ENCODE measurements at regions of chr13 and their contacts with region 1.

Region 1: GRCh38 chr13:113153810-113154748 is 4.4 kb upstream of the PROZ start:
- DNase-seq: peak; percentile 59 to 88 (median 72)
- ATAC-seq: peak; percentile 83
- H3K4me3 ChIP-seq: peak overlapping the region; percentile 74
- H3K4me3 Mint-ChIP-seq: peak overlapping the region; percentile 90
- H3K27ac ChIP-seq: peak overlapping the region in 1 of 2 donors; percentile 73
- H3K27ac Mint-ChIP-seq: peak overlapping the region; percentile 84
- H3K4me1 ChIP-seq: peaks cover 33% of the 10 kb centered on the region
- H3K4me1 Mint-ChIP-seq: peaks cover 21% of the 10 kb centered on the region
- H3K27me3 ChIP-seq: no peaks in the 10 kb centered on the region
- H3K27me3 Mint-ChIP-seq: no peaks in the 10 kb centered on the region
- CTCF ChIP-seq: no peak

Region 2: DNA sequence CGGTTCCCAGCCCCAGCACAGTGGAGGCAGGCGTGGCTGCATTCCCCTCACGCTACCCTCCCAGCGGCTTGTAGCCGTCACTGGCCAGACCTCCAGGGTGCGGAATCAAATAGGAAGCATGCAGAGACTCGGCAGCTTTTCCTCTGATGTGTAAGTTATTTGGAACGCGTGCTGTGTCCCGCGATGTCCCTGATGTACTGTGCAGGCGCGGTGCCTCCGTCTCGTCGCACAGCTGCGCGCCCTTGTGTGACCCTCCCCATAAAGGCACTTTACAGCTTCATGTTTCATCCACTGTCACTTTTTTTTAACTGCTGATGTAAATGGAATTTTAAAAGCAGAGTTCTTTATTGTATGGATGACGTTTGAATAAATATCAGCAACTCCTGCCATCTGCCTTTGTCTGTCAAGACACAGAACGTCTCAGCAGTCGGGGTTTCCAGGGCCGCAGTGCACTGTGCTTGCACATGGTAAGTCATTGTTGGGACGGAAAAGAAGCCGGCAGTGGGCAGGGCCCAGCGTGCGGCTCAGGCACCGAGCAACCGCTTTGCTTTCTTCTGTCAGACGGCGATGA is 55.8 kb before region 1 on chr13:
- CTCF ChIA-PET with region 1: no interaction called
- POLR2A ChIA-PET with region 1: no interaction called
- intact Hi-C with region 1: no loop called
- DNase-seq: no peak
- ATAC-seq: no peak
- H3K4me3 ChIP-seq: no peak overlapping the region
- H3K4me3 Mint-ChIP-seq: no peak overlapping the region
- H3K27ac ChIP-seq: no peak overlapping the region
- H3K27ac Mint-ChIP-seq: no peak overlapping the region
- H3K4me1 ChIP-seq: no peaks in the 10 kb centered on the region
- H3K4me1 Mint-ChIP-seq: no peaks in the 10 kb centered on the region
- H3K27me3 ChIP-seq: no peaks in the 10 kb centered on the region
- H3K27me3 Mint-ChIP-seq: no peaks in the 10 kb centered on the region
- CTCF ChIP-seq: no peak

Region 3: DNA sequence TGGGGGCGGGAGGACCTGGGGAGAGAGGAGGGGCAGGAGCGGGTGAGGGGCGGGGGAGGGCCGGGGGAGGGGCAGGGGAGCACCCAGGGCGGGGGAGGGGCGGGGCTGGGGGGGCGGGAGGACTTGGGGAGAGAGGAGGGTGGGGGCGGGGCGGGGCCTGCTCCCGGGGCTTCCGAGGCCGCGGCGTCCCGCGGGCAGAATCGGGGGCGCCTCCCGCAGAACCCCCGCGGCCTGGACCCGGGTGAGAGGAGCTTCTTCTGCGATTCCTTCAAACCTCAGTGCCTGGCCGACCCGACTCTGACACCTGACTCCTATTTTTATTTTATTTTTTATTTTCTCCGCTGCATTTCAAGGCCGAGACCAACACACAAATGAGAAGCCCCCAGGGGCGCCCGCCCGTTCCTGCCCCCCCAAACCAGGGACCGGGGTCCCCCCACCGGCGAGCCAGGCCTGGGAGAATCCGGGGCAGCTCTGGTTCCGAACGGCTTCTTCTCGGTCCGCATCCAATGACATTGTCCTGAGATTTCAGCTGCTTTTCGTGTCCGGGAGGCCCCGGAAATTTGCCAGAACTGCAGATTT is 210.3 kb after region 1 on chr13:
- CTCF ChIA-PET with region 1: no interaction called
- POLR2A ChIA-PET with region 1: no interaction called
- intact Hi-C with region 1: loop called in 1 of 2 experiments (anchors 5 kb)
- DNase-seq: no peak
- ATAC-seq: no peak
- H3K4me3 ChIP-seq: peak overlapping the region; percentile 19
- H3K4me3 Mint-ChIP-seq: no peak overlapping the region
- H3K27ac ChIP-seq: no peak overlapping the region
- H3K27ac Mint-ChIP-seq: no peak overlapping the region
- H3K4me1 ChIP-seq: peaks cover 14% of the 10 kb centered on the region
- H3K4me1 Mint-ChIP-seq: peaks cover 8% of the 10 kb centered on the region
- H3K27me3 ChIP-seq: peaks cover 27 to 28% of the 10 kb centered on the region in 2 experiments
- H3K27me3 Mint-ChIP-seq: peaks cover 19% of the 10 kb centered on the region
- CTCF ChIP-seq: no peak

Region 4: GRCh38 chr13:113490496-113491417 is 336.7 kb after region 1 on chr13 and contains the start of gene DCUN1D2:
- CTCF ChIA-PET with region 1: no interaction called
- POLR2A ChIA-PET with region 1: no interaction called
- intact Hi-C with region 1: loop called in 1 of 2 experiments (anchors 2 kb)
- DNase-seq: peak; percentile 39 to 87 (median 66)
- ATAC-seq: peak; percentile 71
- H3K4me3 ChIP-seq: peak within 1 kb of the TSS; percentile 79
- H3K4me3 Mint-ChIP-seq: peak within 1 kb of the TSS; percentile 97
- H3K27ac ChIP-seq: peak within 1 kb of the TSS in 1 of 2 donors; percentile 39
- H3K27ac Mint-ChIP-seq: peak within 1 kb of the TSS; percentile 87
- H3K4me1 ChIP-seq: peaks cover 37% of the 10 kb centered on the region
- H3K4me1 Mint-ChIP-seq: peaks cover 70% of the 10 kb centered on the region
- H3K27me3 ChIP-seq: no peaks in the 10 kb centered on the region
- H3K27me3 Mint-ChIP-seq: no peaks in the 10 kb centered on the region
- CTCF ChIP-seq: no peak
- total RNA-seq, gene DCUN1D2: 16.2 to 18.9 TPM